Naive thymus-derived CD8-positive, alpha-beta T cell (primary cell): ENCODE measurements at regions of chr10 and their contacts with region 1.

Region 1: GRCh38 chr10:124741281-124741921 is 2.8 kb downstream of the FAM53B start:
- DNase-seq: peak; percentile 60 to 85 (median 74)
- ATAC-seq: peak; percentile 55 to 59
- H3K4me3 Mint-ChIP-seq: peak overlapping the region; percentile 73 to 99 (median 96)
- H3K27ac Mint-ChIP-seq: peak overlapping the region; percentile 73 to 96 (median 87)
- H3K4me1 Mint-ChIP-seq: peaks cover 45 to 76% (median 71%) of the 10 kb centered on the region in 4 donors
- H3K27me3 Mint-ChIP-seq: no peaks in the 10 kb centered on the region

Region 2: GRCh38 chr10:124626759-124627380 is 114.5 kb before region 1 on chr10:
- POLR2A ChIA-PET with region 1: interaction called, 10 read pairs
- DNase-seq: peak in 7 of 10 donors; percentile 25 to 72 (median 35)
- ATAC-seq: peak; percentile 77 to 80
- H3K4me3 Mint-ChIP-seq: peak overlapping the region; percentile 28 to 74 (median 58)
- H3K27ac Mint-ChIP-seq: peak overlapping the region; percentile 55 to 90 (median 74)
- H3K4me1 Mint-ChIP-seq: peaks cover 24 to 75% (median 46%) of the 10 kb centered on the region in 4 donors
- H3K27me3 Mint-ChIP-seq: no peaks in the 10 kb centered on the region

Region 3: DNA sequence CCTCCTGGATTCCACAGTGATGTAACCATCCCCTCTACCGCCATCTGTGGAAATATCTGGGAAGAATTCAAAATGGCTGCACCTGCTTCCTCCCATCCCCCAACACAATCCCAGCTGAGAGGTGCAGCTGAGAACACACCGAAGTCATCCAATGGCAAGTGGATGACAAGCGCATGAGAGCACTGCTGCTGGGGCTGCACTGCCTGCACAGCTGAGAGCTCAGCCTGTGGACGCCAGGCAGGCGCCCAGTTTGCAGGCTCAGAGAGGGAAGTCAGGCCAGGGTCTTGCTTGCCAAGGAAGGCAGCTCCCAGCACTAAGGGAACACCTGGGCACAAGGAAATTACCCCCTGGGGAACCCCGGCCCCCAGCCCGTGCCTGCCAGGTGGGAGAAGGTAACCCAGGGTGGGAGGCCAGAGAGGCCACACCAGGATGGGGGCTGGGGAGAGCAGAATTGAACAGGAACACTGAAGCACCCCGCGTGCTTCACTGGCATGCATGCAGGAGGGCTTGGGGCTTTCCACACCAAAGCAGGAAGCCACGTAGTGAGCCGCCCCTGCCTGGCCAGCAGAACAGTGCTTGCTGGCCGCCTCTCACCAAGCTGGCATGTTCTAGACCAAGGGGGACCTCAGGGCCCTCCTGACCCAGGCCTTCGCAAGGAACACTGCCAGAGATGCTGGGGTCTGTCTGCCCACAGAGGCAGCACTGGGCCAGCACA is 43.4 kb before region 1 on chr10:
- POLR2A ChIA-PET with region 1: interaction called, 16 read pairs
- DNase-seq: peak in 2 of 10 donors; percentile 14 to 30
- ATAC-seq: peak; percentile 60 to 72
- H3K4me3 Mint-ChIP-seq: peak overlapping the region in 9 of 10 donors; percentile 20 to 82 (median 76)
- H3K27ac Mint-ChIP-seq: peak overlapping the region; percentile 85 to 97 (median 92)
- H3K4me1 Mint-ChIP-seq: peaks cover 47 to 99% (median 92%) of the 10 kb centered on the region in 4 donors
- H3K27me3 Mint-ChIP-seq: no peaks in the 10 kb centered on the region